ENCODE measurements at regions of chr2 and their contacts with region 1.

Region 1: GRCh38 chr2:24827321-24828237 is 34.4 kb downstream of the CENPO start:
- DNase-seq: peak; percentile 84 to 95 (median 88)
- H3K4me3 ChIP-seq: no peak overlapping the region
- H3K27ac ChIP-seq: no peak overlapping the region
- H3K4me1 ChIP-seq: peaks cover 0 to 8% of the 10 kb centered on the region in 2 donors
- H3K27me3 ChIP-seq: no peaks in the 10 kb centered on the region
- CTCF ChIP-seq: peak; percentile 83 to 95 (median 92)
- POLR2A ChIP-seq: no peak

Region 2: GRCh38 chr2:24409700-24410556 is 417.7 kb before region 1 on chr2:
- intact Hi-C with region 1: loop called (anchors 2 to 5 kb)
- DNase-seq: peak; percentile 21 to 74 (median 45)
- H3K4me3 ChIP-seq: no peak overlapping the region
- H3K27ac ChIP-seq: no peak overlapping the region
- H3K4me1 ChIP-seq: no peaks in the 10 kb centered on the region
- H3K27me3 ChIP-seq: no peaks in the 10 kb centered on the region
- CTCF ChIP-seq: peak; percentile 73 to 88 (median 80)
- POLR2A ChIP-seq: no peak

Region 3: GRCh38 chr2:24421668-24422067 is 405.9 kb before region 1 on chr2:
- intact Hi-C with region 1: loop called in 1 of 2 experiments (anchors 2 kb)
- DNase-seq: peak; percentile 59 to 86 (median 66)
- H3K4me3 ChIP-seq: no peak overlapping the region
- H3K27ac ChIP-seq: no peak overlapping the region
- H3K4me1 ChIP-seq: no peaks in the 10 kb centered on the region
- H3K27me3 ChIP-seq: no peaks in the 10 kb centered on the region
- CTCF ChIP-seq: peak in 5 of 6 experiments; percentile 28 to 69 (median 65)
- POLR2A ChIP-seq: no peak

Measured in adrenal gland (tissue), 19 donors.